Posterior vena cava (tissue), 2 donors: ENCODE measurements at regions of chr12 and their contacts with region 1.

Region 1: DNA sequence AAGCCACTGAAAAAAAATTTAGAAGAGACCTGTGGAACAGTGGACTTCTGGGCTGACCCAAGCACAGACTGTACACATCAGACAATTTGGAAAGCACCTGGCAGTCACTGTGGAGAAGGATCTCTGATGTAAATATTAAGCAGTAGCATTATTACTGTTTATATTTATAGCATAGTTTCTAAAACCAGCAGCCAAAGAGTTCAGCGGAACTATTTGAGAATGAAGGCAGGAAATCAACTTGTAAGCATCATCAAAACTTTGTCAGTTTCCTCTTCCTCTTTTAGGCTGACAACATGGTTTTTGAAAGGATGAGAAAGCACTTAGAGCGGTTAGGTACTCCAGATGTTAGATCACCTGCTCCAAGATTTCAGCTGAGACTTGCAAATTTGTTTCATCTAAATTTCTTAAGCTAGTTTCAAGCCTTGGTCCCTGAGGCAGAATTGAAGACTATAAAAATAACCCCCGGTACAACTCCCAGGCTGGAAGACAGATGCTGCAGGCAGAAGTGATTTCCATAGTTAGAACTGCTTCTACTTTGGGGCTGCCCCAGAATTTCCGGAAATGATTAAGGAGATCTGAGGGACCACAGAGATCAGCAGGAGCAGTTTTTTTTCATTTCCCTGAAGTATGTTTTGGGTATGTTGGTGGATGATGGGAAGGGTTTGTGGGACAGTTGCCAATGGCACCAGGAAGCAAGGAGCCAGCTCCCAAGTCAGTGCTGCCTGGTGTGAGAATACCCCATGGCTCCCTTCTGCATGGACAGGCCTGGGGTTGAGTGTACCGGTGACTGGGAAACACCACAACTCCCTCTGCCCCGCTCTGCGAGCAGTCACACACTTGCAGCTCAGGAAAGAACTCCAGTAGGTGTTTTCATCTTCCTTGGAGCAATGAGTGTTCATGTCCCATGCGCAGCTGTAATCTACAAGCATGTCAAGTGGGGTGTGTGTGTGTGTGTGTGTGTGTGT is 354.5 kb downstream of the NUAK1 start:
- DNase-seq: no peak

Region 2: GRCh38 chr12:105030820-105031807 is 753.2 kb before region 1 on chr12:
- intact Hi-C with region 1: loop called in 1 of 2 experiments (anchors 5 kb)
- DNase-seq: no peak

Region 3: GRCh38 chr12:107635139-107635538 is 1850.9 kb after region 1 on chr12:
- intact Hi-C with region 1: no loop called
- DNase-seq: no peak